Mammary epithelial cell (primary cell): ENCODE measurements at regions of chr15 and their contacts with region 1.

Region 1: DNA sequence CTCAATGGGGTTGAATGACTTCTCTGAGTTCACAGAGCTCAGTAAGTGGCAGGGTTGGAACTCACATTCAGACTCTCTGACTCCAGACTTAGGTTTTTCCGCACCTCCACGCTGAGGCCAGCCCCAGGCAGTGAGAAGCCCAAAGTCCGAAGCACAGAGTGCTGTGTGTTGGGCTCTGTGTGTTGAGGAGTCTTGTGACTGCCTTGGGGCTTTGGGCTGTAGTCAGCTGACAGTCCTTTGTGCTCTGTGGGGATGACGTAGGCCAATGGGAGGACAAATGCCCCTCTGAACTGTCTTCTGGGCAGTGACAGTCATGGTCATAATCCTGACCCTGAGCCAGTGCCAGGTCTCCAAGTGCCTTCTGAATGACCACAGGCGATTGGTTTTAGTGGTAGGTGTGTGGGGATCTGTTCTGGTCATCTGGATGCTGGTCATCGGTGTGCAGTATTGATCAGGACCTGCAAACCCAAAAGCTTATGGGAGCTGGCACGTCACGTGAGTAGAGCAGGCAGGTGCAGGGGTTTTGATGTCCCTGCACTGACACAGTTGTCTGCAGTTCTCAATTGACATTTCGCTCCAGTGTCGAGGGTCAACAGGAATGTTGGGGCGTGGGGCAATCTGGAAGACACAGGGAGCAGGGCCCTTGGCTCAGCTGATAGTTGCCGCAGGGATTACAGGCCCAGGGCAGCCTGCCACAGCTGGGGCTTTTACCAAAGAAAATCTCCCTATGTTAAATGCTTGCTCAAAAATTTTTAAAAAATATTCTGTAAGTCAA is 45.3 kb downstream of the CAPN3 start:
- DNase-seq: no peak
- H3K4me3 ChIP-seq: no peak overlapping the region
- H3K27ac ChIP-seq: no peak overlapping the region
- H3K4me1 ChIP-seq: peaks cover 3% of the 10 kb centered on the region
- H3K27me3 ChIP-seq: no peaks in the 10 kb centered on the region
- CTCF ChIP-seq: no peak

Region 2: DNA sequence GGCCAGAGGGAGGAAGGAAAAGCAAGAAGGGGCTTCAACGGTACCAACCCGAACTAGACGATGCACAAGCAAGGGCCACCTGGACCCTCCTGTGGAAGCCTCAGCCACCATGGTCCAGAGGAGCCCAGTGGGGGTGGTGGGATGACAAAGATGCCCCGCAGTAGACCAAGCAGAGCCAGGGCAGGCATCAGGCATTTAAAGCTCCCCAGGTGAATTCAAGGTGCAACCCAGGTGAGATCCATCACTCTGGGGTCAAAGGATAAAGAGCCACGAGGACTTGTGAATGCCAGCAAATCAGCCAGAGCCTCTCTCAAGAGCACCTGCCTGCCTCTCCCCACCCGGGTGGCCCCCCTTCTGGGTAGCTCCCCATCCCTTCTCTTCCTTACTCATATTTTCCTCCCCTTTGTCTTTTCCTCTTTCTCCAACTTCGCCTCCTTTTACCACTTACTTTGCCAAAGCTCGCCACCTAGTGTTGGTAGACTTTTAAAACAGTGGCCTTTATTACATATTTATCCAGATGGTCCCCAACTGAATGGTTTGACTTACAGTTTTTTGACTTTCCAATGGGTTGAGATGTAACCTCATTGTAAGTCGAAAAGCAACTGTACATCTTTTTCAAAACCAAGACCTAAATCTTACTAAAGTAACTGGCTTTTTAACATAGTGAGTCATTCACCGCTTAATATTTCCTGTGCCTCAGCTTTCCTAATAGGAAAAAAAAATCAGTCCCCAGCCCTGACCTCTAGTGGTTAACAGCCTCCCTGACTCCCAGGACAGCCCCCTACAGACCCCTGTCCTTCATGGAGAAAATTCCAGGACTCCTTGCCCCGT is 267.0 kb before region 1 on chr15:
- CTCF ChIA-PET with region 1: no interaction called
- dilution Hi-C with region 1: no loop called
- in situ Hi-C with region 1: no loop called
- intact Hi-C with region 1: no loop called
- DNase-seq: peak; percentile 40
- H3K4me3 ChIP-seq: no peak overlapping the region
- H3K27ac ChIP-seq: no peak overlapping the region
- H3K4me1 ChIP-seq: no peaks in the 10 kb centered on the region
- H3K27me3 ChIP-seq: no peaks in the 10 kb centered on the region
- CTCF ChIP-seq: peak; percentile 53 to 68

Region 3: DNA sequence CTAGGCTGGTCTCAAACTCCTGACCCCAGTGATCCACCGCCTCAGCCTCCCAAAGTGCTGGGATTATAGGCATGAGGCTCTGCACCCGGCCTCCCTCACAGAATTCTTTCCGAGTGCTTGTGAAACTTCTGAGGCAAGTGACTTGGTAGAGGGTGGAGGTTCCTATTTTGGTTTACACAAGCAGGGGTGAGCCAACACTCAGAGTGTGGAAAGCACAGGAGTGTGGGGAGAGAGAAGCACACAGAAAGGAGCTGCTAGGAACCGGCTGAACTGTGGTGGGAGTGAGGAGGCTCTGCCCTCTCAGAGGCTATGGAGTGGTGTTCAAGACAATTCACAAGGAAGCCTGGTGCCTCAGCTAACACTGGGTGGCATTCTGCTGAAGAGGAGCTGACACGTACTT is 37.6 kb before region 1 on chr15:
- CTCF ChIA-PET with region 1: no interaction called
- dilution Hi-C with region 1: loop called (anchors 5 kb)
- in situ Hi-C with region 1: no loop called
- intact Hi-C with region 1: no loop called
- DNase-seq: no peak
- H3K4me3 ChIP-seq: no peak overlapping the region
- H3K27ac ChIP-seq: no peak overlapping the region
- H3K4me1 ChIP-seq: peaks cover 8% of the 10 kb centered on the region
- H3K27me3 ChIP-seq: no peaks in the 10 kb centered on the region
- CTCF ChIP-seq: no peak

Region 4: GRCh38 chr15:42465520-42466259 is 61.0 kb after region 1 on chr15:
- CTCF ChIA-PET with region 1: no interaction called
- dilution Hi-C with region 1: no loop called
- in situ Hi-C with region 1: no loop called
- intact Hi-C with region 1: no loop called
- DNase-seq: no peak
- H3K4me3 ChIP-seq: no peak overlapping the region
- H3K27ac ChIP-seq: no peak overlapping the region
- H3K4me1 ChIP-seq: no peaks in the 10 kb centered on the region
- H3K27me3 ChIP-seq: no peaks in the 10 kb centered on the region
- CTCF ChIP-seq: no peak